ENCODE measurements at regions of chr4 and their contacts with region 1.

Region 1: DNA sequence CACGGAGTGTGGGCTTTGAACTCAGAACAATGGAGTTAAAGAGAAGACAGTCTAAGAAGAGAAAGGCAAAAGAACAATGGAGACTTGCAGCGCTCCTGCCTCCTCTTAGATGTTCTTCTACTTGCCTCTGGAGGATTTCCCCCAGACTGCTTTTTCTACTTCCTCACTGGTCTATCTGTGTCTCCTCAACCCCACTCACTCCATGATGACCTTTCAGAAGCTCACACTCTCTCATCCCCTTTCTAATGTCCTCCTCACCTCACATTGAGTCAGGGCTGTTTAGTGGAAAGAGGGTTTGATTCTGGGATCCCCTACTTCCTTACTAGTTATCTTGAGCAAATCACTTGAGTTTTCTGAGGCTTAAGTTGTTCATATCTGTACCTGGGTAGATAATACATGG is 12.2 kb upstream of the HERC6 start:
- DNase-seq: no peak
- ATAC-seq: no peak
- H3K4me3 ChIP-seq: no peak overlapping the region
- H3K27ac ChIP-seq: no peak overlapping the region
- H3K4me1 ChIP-seq: no peaks in the 10 kb centered on the region
- H3K27me3 ChIP-seq: no peaks in the 10 kb centered on the region
- CTCF ChIP-seq: no peak

Region 2: GRCh38 chr4:88514557-88515511 is 148.4 kb after region 1 on chr4:
- intact Hi-C with region 1: loop called (anchors 5 kb)
- DNase-seq: no peak
- ATAC-seq: peak; percentile 95
- H3K4me3 ChIP-seq: no peak overlapping the region
- H3K27ac ChIP-seq: no peak overlapping the region
- H3K4me1 ChIP-seq: peaks cover 6% of the 10 kb centered on the region
- H3K27me3 ChIP-seq: no peaks in the 10 kb centered on the region
- CTCF ChIP-seq: no peak

Measured in lower lobe of right lung (tissue), 2 donors.